Heart right ventricle (tissue), 16 donors: ENCODE measurements at regions of chr6 and their contacts with region 1.

Region 1: DNA sequence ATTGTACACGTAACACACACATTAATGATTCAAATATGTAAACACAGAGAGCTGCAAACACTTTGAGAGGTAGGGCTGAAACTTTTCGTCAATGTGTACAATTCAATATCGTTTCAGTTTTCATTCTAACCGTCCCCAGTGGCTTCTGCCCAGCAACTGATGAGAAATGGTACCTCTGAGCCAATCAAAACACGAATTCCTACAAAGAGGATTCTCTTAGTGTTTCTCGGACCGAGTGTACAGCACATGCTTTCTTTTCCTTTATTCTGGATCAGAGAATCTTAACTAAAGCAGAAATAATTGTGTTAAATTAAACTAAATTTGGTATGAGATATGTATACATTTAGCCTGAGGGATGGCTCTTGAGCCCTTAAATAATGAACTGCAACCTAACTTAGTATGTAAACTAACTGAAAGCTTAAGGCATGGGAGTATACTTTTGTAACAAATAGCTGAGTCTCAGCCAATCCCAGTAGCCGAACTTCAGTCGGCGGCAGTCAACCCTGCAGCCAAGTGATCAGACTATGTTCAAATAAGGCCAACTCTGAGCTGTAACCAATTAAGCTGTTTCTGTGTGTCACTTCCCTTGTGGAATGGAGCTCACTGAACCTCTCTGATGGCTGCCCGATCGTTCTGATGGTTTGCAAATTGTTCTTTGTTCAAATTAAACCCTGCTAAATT is 16.1 kb downstream of the BTN2A1 start:
- DNase-seq: peak; percentile 64 to 87
- ATAC-seq: peak; percentile 95 to 98 (median 97)
- H3K4me3 ChIP-seq: peak overlapping the region; percentile 9 to 66 (median 54)
- H3K27ac ChIP-seq: peak overlapping the region; percentile 77 to 95 (median 90)
- H3K4me1 ChIP-seq: peaks cover 0 to 53% (median 15%) of the 10 kb centered on the region in 9 donors
- H3K27me3 ChIP-seq: no peaks in the 10 kb centered on the region
- CTCF ChIP-seq: no peak

Region 2: DNA sequence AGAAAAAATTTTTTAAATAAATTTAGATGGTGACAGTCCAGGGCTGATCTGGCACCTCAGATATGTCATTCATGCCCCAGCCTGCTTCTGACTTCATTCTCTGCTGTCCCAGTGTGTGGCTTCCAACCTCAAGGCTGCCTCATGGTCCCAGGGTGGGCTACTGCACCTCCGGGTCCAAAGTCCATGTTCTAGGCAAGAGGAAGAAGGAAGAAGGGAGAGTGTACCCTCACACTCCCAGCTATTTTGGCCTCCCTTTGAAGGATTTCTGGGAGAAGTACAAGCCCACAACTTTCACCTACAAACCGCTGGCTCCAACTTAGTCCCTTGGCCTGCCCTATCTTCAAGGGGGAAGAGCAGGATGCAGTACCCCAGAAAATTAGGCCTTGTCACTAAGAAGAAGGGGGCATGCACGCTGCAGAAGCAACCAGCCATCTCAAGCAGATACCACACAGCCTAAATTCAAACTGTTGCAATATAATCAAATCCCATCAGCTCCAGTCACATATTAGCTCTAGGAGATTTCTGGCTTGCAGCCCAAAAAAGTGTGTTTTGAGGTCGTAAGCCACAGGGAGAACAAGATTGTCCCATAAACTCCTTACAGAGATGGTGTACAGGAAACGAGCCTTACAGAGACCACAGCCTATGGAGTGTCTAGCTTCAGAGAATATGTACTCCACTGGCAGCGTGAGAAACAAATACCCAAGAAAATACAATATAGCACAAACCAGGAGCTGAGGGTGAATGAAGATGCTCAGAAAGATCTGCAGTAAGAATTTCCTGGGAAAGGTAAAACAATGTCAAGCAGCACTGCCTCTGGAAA is 109.8 kb before region 1 on chr6:
- intact Hi-C with region 1: loop called in 1 of 10 experiments (anchors 5 kb)
- DNase-seq: no peak
- ATAC-seq: peak in 3 of 8 donors; percentile 29 to 48 (median 43)
- H3K4me3 ChIP-seq: peak overlapping the region; percentile 44 to 73 (median 64)
- H3K27ac ChIP-seq: peak overlapping the region; percentile 25 to 96 (median 82)
- H3K4me1 ChIP-seq: peaks cover 0 to 30% (median 20%) of the 10 kb centered on the region in 9 donors
- H3K27me3 ChIP-seq: no peaks in the 10 kb centered on the region
- CTCF ChIP-seq: no peak

Region 3: DNA sequence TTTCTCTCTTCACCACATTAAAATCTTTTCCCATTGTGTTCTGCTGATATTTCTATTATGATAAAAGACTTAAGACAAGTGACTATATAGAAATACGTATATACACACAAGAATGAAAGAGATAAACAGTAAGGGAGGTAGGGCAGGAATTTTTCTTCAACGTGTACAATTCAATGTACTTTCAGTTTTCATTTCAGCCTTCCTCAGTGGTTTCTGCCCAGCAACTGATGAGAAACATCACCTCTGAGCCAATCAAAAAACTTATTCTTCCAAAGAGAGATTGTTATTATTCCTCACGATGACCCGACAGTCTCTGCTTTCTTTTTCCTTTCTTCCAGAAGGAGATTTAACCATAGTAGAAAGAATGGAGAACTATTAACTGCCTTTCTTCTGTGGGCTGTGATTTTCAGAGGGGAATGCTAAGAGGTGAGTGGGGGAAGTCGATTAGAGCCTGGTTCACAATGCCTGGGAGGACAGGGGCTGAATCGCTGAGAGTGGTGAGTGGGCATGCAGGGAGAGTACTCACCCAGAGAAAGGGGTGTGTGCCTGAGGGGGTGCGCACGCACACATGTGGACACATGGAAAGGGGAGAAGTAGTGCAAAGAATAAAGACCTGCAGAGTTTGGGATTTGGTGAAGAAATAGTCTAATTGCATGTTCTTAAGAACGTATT is 71.8 kb before region 1 on chr6 and contains the start of gene BTN3A1:
- intact Hi-C with region 1: loop called in 1 of 10 experiments (anchors 5 kb)
- DNase-seq: peak; percentile 59 to 71
- ATAC-seq: peak; percentile 88 to 97 (median 94)
- H3K4me3 ChIP-seq: peak within 1 kb of the TSS; percentile 33 to 70 (median 65)
- H3K27ac ChIP-seq: peak within 1 kb of the TSS; percentile 58 to 95 (median 82)
- H3K4me1 ChIP-seq: peaks cover 0 to 45% (median 18%) of the 10 kb centered on the region in 9 donors
- H3K27me3 ChIP-seq: no peaks in the 10 kb centered on the region
- CTCF ChIP-seq: no peak
- total RNA-seq, gene BTN3A1: 3.9 to 44.3 (median 8.6) TPM

Region 4: DNA sequence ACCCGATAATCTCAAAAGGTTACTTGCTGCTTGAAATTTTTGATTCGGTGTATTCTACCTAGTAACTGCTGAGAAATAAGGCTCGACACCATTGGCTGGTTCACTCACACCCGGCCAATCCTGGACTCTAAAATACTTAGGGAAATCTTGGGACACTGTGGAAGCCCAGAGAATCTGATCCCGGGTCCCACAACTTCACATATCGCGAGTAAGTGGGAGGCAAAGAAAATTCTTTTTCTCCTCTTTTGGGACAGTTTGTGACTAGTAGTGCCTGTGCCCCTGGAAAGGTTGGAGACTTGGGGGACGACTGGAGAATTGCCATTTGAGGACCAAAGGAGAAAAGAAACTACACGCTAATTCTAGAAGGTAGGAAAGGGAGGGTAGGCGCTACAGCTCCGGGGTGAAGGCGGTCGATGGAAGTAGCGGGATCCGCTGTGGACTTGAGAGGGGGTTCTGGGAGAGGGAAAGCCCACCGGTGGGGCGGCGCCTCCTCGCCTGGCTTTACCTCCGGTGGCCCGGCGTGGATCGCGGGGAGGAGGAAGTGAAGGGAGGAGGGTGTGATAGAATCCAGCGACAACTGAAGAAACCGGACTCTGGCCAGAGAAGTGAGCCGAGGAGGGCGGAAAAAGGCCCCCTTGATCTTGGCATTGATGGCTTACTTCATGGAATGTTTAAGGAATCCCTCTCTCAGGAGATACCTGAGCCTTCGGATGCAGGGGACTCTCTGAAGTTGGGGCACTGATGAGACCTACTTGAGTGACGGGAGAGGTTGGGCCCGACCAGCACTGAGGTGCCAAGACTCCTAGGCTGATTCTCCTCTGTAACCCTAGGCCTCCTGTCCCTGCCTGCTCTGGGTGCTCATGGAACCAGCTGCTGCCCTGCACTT is 52.4 kb before region 1 on chr6:
- intact Hi-C with region 1: no loop called
- DNase-seq: peak; percentile 53 to 81
- ATAC-seq: peak; percentile 96 to 100 (median 99)
- H3K4me3 ChIP-seq: peak overlapping the region; percentile 48 to 90 (median 66)
- H3K27ac ChIP-seq: peak overlapping the region; percentile 21 to 94 (median 84)
- H3K4me1 ChIP-seq: peaks cover 0 to 48% (median 27%) of the 10 kb centered on the region in 9 donors
- H3K27me3 ChIP-seq: no peaks in the 10 kb centered on the region
- CTCF ChIP-seq: no peak

Region 5: GRCh38 chr6:26439657-26440056 is 34.2 kb before region 1 on chr6:
- intact Hi-C with region 1: loop called in 1 of 10 experiments (anchors 2 kb)
- DNase-seq: no peak
- ATAC-seq: no peak
- H3K4me3 ChIP-seq: peak overlapping the region in 9 of 10 donors; percentile 40 to 69 (median 60)
- H3K27ac ChIP-seq: peak overlapping the region in 9 of 10 donors; percentile 35 to 95 (median 82)
- H3K4me1 ChIP-seq: peaks cover 0 to 30% (median 16%) of the 10 kb centered on the region in 9 donors
- H3K27me3 ChIP-seq: no peaks in the 10 kb centered on the region
- CTCF ChIP-seq: no peak

Region 6: DNA sequence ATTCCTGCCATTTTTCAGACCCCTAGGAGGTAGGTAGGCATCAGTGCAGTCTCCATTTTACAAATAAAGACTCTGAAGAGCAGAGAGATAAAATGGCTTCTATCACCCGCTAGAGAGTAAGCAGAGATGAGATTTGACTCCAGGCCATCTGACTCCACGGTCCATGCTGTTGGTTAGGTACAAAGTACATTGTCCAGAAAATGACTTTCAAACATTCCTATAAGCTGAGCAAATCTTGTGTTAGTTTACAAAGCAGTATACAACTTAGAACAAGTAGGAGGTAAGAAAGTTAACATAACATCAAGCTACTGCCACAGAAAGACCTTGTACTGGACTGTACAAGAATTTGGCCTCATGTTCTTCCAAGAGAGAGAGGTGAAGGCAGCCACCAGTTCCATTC is 41.1 kb after region 1 on chr6:
- intact Hi-C with region 1: loop called in 2 of 10 experiments (anchors 5 kb)
- DNase-seq: no peak
- ATAC-seq: no peak
- H3K4me3 ChIP-seq: no peak overlapping the region
- H3K27ac ChIP-seq: no peak overlapping the region
- H3K4me1 ChIP-seq: peaks cover 0 to 1% (median under 1%) of the 10 kb centered on the region in 9 donors
- H3K27me3 ChIP-seq: no peaks in the 10 kb centered on the region
- CTCF ChIP-seq: no peak